HAP-1 (cell line): ENCODE measurements at regions of chr16 and their contacts with region 1.

Region 1: DNA sequence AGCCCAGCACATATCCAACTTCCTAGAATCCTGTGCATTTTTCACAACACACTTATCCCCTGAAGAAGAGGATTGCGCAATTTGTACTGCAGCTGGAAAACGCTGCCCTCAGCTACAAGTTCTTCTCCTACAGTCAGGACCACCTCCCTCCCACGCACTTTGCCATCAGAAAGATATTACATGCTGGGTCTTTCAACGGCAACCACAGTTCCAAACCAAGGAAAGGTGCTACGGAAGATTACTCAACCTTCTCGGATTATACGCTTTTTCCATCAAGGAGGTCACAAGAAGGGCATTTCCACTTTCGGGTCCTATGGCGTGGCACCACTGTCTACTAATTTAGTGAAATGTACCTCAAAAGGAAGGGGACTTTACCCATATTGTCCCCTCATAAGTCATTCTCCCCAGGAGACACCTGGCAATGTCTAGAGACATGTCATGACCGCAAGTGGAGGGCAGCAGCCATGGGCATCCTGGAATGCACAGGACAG is 35.2 kb downstream of the USP7 start:
- DNase-seq: no peak
- H3K4me3 ChIP-seq: no peak overlapping the region
- H3K4me1 ChIP-seq: no peaks in the 10 kb centered on the region
- H3K27me3 ChIP-seq: no peaks in the 10 kb centered on the region

Region 2: GRCh38 chr16:9008601-9009260 is 80.2 kb after region 1 on chr16:
- in situ Hi-C with region 1: loop called (anchors 10 kb)
- DNase-seq: peak; percentile 73 to 91
- H3K4me3 ChIP-seq: no peak overlapping the region
- H3K4me1 ChIP-seq: peaks cover 3% of the 10 kb centered on the region; the same call in 1 of the 2 replicates
- H3K27me3 ChIP-seq: no peaks in the 10 kb centered on the region